Tibial artery (tissue), 4 donors: ENCODE measurements at regions of chr17 and their contacts with region 1.

Region 1: DNA sequence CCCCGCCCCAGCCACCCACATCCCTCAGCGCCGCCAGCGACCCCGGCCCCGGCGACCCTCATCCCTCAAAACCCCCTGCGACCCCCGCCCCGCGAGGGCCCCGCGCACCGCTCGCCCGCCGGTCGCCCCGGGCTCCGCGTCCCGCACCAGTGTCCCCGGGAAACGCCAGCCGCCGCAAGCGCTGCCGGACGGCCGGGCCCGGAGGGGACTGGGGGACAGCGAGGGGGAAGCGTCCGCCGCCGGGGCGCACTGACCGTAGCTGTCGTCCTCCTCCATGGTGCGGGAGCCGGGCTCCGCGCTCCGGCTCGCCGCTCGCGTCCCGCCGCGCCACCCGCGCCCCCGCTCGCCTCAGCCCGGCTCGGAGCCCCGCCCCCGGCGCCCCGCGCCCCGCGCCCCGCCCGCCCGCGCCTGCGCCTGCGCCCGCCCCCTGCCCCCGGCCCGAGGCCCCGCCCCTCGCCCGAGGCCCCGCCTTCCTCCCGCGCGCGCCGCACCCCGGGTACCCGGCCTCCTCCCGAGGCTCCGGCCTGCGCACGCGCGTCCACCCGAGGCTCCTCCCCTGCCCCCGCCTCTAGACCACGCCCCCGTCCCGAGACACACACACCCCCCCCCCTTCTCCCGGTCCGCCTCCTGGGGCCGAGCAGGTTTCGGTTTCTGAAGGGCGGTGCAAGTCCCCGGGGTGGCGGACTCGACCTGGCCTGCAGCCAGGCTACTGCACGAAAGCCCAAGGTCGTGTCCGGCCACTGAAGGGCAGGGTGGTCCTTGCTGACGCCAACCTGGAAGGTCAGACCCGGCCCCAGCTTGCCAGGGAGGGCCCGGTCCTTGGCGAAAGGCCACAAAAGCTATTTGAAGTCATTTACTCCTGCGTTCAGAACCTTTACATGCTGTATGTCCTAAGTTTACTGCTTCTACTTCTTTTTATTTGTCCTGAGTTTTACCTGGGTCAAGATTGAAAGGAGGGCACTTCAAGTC is at the start of gene CYTH1:
- DNase-seq: peak; percentile 94 to 98
- H3K4me3 ChIP-seq: peak within 1 kb of the TSS; percentile 85 to 100
- H3K27ac ChIP-seq: peak within 1 kb of the TSS; percentile 87 to 95
- H3K4me1 ChIP-seq: peaks cover 0 to 20% (median 9%) of the 10 kb centered on the region in 4 donors
- H3K27me3 ChIP-seq: no peaks in the 10 kb centered on the region
- CTCF ChIP-seq: no peak

Region 2: DNA sequence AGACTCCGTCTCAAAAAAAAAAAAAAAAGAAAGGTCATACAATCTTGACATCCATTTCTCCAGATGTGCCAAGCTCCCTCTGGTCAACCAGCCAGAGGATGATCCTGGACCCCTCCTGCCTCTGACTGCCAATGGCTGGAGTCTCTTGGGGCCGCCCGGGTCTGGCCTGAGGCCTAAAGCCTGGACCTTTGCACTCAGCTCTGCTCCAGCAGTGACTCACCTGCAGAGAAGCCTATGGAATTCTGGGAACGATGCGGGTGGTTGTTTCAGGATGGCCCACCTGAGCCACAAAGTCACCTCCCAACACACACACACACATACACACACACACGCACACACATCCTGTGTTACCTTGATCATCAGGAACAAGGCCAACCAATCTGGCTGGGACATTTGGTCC is 141.0 kb before region 1 on chr17:
- intact Hi-C with region 1: no loop called
- DNase-seq: no peak
- H3K4me3 ChIP-seq: no peak overlapping the region
- H3K27ac ChIP-seq: no peak overlapping the region
- H3K4me1 ChIP-seq: peaks cover 0 to 10% (median 0%) of the 10 kb centered on the region in 4 donors
- H3K27me3 ChIP-seq: peaks cover 0 to 4% of the 10 kb centered on the region in 2 donors
- CTCF ChIP-seq: no peak

Region 3: GRCh38 chr17:78839762-78840470 is 57.7 kb after region 1 on chr17:
- intact Hi-C with region 1: loop called (anchors 2 kb)
- DNase-seq: peak; percentile 34 to 75
- H3K4me3 ChIP-seq: peak overlapping the region; percentile 78 to 92
- H3K27ac ChIP-seq: peak overlapping the region; percentile 98 to 99
- H3K4me1 ChIP-seq: peaks cover 0 to 29% (median 21%) of the 10 kb centered on the region in 4 donors
- H3K27me3 ChIP-seq: no peaks in the 10 kb centered on the region
- CTCF ChIP-seq: no peak